GM23248 (cell line): ENCODE measurements at regions of chr2 and their contacts with region 1.

Region 1: DNA sequence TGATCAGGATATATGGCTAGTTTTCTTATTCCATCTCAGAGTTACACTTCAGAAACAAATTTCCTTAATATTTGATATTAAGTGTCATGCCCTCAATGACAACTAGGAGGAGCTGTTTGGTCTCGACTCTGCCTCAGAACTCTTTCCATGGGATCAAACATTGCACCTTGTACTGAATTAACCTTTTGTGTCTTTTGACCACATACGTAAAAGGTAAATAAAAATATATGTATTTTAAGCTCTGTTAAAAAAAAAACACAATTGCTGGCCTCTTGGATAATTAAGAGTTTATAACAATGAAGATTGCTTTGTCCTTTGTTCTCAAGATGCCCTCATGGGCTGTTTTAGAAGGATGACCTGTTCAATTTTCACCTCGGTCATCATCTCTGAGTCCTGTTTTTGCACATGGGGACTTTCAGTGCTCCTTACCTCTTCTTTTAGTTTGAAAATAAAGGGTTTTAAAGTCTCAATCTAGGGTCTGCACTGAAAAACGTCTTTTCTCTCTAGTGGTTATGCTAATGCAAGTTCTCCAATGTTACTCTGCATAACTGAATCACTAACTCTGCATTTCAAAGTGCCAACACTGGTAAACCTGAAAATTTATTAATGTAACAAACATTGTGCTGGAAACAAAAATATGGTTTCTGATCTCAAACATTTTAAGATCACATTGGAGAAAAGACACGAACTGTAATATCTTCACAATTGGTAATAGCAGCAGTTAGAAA is 18.8 kb upstream of the FN1 start:
- DNase-seq: peak; percentile 55
- H3K4me3 ChIP-seq: no peak overlapping the region
- H3K27ac ChIP-seq: peak overlapping the region; percentile 21; the same call in 1 of the 2 replicates
- H3K4me1 ChIP-seq: peaks cover 9% of the 10 kb centered on the region
- H3K27me3 ChIP-seq: no peaks in the 10 kb centered on the region

Region 2: DNA sequence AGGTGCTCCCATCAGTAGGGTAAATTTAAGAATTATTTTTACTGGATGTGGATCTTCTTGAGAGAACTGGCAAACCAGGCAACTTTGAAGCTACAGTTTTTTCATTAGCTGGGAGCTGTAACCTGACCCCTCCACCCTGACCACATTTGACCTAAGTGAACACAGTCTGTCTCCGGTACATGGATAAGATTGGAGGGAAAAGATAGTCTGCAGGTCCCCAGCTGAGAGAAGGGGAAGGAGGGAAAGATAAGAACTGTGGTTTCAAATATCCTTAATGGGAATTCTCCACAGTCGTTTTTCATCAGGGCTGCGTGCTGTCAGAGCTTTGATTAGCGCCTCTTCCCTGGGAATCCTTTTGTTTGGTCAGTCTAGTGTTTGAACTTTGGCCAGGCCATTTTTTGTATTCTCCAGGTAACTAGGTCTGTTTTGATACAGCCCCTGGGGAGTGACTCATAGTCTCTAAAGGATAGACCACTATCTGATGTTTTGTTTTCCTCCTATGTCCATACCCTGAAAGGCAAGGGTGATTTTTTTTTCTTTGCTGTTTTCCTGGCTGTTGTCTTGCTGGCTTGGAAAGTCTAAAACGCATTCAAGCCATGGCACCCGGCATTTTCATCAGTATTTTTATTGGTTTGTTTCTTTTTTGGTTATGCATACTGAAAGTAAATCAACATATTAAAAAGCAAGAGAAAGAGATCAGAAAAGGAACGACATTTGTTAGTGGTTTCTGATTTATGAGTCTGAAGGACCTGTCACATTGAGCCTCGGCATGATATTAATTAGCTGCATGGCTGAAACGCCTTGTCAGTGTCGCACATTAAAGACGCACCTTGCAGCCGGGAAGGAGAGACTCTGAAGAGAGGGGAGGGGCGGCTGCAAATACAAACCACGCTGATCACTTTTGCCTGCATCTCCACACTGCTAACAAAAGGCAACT is 164.6 kb after region 1 on chr2:
- in situ Hi-C with region 1: no loop called
- DNase-seq: peak; percentile 37
- H3K4me3 ChIP-seq: peak overlapping the region; percentile 40
- H3K27ac ChIP-seq: no peak overlapping the region
- H3K4me1 ChIP-seq: peaks cover 25% of the 10 kb centered on the region
- H3K27me3 ChIP-seq: no peaks in the 10 kb centered on the region

Region 3: GRCh38 chr2:215900203-215900611 is 445.5 kb after region 1 on chr2:
- in situ Hi-C with region 1: loop called (anchors 10 kb)
- DNase-seq: peak; percentile 94
- H3K4me3 ChIP-seq: no peak overlapping the region
- H3K27ac ChIP-seq: peak overlapping the region; percentile 72
- H3K4me1 ChIP-seq: peaks cover 51% of the 10 kb centered on the region
- H3K27me3 ChIP-seq: no peaks in the 10 kb centered on the region